CD8-positive, alpha-beta T cell (primary cell): ENCODE measurements at regions of chr1 and their contacts with region 1.

Region 1: DNA sequence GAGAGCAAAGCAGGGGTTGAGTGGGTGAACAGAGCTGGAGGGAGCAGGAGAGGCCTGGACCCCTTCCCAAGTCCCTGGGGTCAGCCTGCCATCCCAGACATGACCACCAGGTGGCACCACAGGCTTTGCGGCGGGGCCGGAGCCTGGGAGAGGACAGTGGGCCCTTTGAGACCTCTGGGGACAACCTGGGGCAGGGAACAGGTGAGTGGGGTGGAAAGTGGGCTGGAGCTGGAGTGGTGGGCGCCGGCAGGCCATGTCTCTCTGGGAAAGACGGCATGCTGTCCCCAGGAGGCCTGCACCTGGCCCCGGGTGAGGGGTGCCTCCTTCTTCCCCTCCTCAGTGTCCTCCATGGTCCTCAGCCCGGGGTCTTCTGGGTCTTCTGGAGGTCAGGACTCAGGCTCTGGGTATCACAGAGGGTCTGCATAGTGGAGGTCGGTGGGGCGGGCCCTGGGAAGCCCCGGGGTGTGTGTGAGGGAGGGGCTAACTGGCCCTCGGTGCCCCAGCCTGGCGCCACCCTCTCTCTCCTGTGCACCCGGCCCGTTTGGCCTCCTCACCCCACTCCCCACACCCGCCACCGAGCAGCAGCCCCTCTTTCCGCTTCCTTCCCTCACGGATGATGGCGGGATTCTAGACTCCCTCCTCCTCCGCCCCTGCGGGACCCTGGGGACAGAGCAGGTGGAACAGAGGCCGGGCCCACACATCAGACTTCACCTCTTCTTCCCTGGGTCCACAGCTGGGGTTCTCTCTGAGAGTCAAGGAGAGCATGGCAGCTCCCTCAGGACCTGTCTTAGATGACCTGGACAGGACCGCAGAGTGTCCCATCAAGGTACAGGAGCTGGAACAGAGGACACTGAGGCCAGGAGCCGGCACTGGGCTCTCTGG is 28.4 kb upstream of the PKP1 start:
- DNase-seq: peak; percentile 34 to 73 (median 55)
- ATAC-seq: no peak
- H3K4me3 ChIP-seq: no peak overlapping the region
- H3K4me3 Mint-ChIP-seq: no peak overlapping the region
- H3K27ac ChIP-seq: no peak overlapping the region
- H3K27ac Mint-ChIP-seq: no peak overlapping the region
- H3K4me1 ChIP-seq: no peaks in the 10 kb centered on the region
- H3K4me1 Mint-ChIP-seq: no peaks in the 10 kb centered on the region
- H3K27me3 ChIP-seq: no peaks in the 10 kb centered on the region
- H3K27me3 Mint-ChIP-seq: peaks cover 8% of the 10 kb centered on the region
- CTCF ChIP-seq: peak; percentile 94

Region 2: GRCh38 chr1:201361652-201362504 is 107.0 kb after region 1 on chr1:
- CTCF ChIA-PET with region 1: no interaction called
- POLR2A ChIA-PET with region 1: no interaction called
- intact Hi-C with region 1: loop called in 1 of 2 experiments (anchors 1 kb)
- DNase-seq: peak in 2 of 9 experiments; percentile 14 to 34
- ATAC-seq: no peak
- H3K4me3 ChIP-seq: no peak overlapping the region
- H3K4me3 Mint-ChIP-seq: no peak overlapping the region
- H3K27ac ChIP-seq: no peak overlapping the region
- H3K27ac Mint-ChIP-seq: no peak overlapping the region
- H3K4me1 ChIP-seq: no peaks in the 10 kb centered on the region
- H3K4me1 Mint-ChIP-seq: no peaks in the 10 kb centered on the region
- H3K27me3 ChIP-seq: no peaks in the 10 kb centered on the region
- H3K27me3 Mint-ChIP-seq: peaks cover 12% of the 10 kb centered on the region
- CTCF ChIP-seq: no peak

Region 3: GRCh38 chr1:201408176-201408833 is 153.4 kb after region 1 on chr1:
- CTCF ChIA-PET with region 1: no interaction called
- POLR2A ChIA-PET with region 1: no interaction called
- intact Hi-C with region 1: loop called in 1 of 2 experiments (anchors 1 kb)
- DNase-seq: peak; percentile 38 to 74 (median 63)
- ATAC-seq: peak; percentile 62
- H3K4me3 ChIP-seq: no peak overlapping the region
- H3K4me3 Mint-ChIP-seq: no peak overlapping the region
- H3K27ac ChIP-seq: no peak overlapping the region
- H3K27ac Mint-ChIP-seq: no peak overlapping the region
- H3K4me1 ChIP-seq: no peaks in the 10 kb centered on the region
- H3K4me1 Mint-ChIP-seq: no peaks in the 10 kb centered on the region
- H3K27me3 ChIP-seq: no peaks in the 10 kb centered on the region
- H3K27me3 Mint-ChIP-seq: peaks cover 3% of the 10 kb centered on the region
- CTCF ChIP-seq: peak; percentile 80